Activated naive CD4-positive, alpha-beta T cell treated with anti-CD3 and anti-CD28 coated beads, Interleukin-2, amount 10 ng/mL, durations not matched to agents 7 days and 5 days (primary cell): ENCODE measurements at regions of chr7 and their contacts with region 1.

Region 1: GRCh38 chr7:2863461-2864066 is 19.5 kb upstream of the GNA12 start:
- DNase-seq: peak; percentile 82
- H3K4me3 Mint-ChIP-seq: peak overlapping the region; percentile 39
- H3K27ac Mint-ChIP-seq: peak overlapping the region; percentile 86
- H3K4me1 Mint-ChIP-seq: peaks cover 29% of the 10 kb centered on the region
- H3K27me3 Mint-ChIP-seq: no peaks in the 10 kb centered on the region

Region 2: GRCh38 chr7:2876031-2876731 is 12.6 kb after region 1 on chr7:
- CTCF ChIA-PET with region 1: interaction called, 11 read pairs
- DNase-seq: no peak
- H3K4me3 Mint-ChIP-seq: no peak overlapping the region
- H3K27ac Mint-ChIP-seq: no peak overlapping the region
- H3K4me1 Mint-ChIP-seq: peaks cover 52% of the 10 kb centered on the region
- H3K27me3 Mint-ChIP-seq: peaks cover 4% of the 10 kb centered on the region

Region 3: GRCh38 chr7:2886900-2887299 is 23.3 kb after region 1 on chr7:
- CTCF ChIA-PET with region 1: interaction called, 11 read pairs
- DNase-seq: peak; percentile 75
- H3K4me3 Mint-ChIP-seq: no peak overlapping the region
- H3K27ac Mint-ChIP-seq: no peak overlapping the region
- H3K4me1 Mint-ChIP-seq: peaks cover 3% of the 10 kb centered on the region
- H3K27me3 Mint-ChIP-seq: peaks cover 11% of the 10 kb centered on the region

Region 4: DNA sequence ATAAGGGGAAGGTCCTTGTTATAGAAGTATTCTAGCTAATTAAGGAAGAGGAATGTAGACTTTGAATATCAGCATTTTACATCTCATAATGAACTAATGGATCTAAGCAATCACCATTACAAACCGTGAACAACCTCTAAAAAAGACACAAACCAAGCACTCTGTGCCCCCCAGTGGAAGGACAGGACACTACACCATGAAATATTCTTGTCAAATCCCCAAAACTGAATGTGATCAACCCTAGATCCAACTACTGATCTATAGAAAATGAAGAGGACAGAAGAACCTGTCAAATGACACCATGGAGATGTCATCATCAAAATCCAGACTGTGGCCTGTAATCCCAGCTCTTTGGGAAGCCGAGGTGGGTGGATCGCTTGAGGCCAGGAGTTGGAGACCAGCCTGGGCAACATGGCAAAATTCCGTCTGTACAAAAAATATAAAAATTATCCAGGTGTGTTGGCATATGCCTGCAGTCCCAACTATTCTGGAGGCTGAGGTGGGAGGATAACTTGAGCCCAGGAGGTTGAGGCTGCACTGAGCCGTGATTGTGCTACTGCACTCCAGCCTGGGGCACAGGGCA is 291.4 kb after region 1 on chr7:
- CTCF ChIA-PET with region 1: interaction called, 21 read pairs
- DNase-seq: peak; percentile 71
- H3K4me3 Mint-ChIP-seq: no peak overlapping the region
- H3K27ac Mint-ChIP-seq: no peak overlapping the region
- H3K4me1 Mint-ChIP-seq: peaks cover 19% of the 10 kb centered on the region
- H3K27me3 Mint-ChIP-seq: peaks cover 29% of the 10 kb centered on the region